ENCODE measurements at regions of chr3 and their contacts with region 1.

Region 1: DNA sequence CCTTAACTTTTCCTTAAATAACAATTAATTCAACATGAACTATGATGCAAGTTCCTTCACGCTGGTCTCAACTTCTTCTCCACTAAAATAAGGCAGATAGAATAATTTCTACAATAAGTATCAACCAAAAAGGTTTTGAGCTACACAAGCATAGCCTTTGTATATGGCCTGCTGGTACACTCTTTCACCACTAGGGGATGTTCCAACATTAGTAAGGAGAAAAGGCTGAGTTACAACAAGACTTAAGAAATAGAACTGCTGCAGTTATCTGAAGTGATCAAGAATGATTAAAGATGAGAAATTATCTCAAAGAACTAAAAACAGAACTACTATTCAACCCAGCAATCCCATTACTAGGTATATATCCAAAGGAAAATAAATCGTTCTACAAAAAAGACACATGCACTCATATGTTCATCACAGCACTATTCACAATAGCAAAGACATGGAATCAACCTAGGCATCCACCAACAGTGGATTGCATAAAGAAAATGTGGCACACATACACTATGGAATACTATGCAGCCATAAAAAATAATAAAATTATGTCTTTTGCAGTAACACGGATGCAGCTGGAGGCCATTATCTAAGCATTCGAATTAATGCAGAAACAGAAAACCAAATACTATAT is 14.4 kb downstream of the ATP13A3 start:
- DNase-seq: no peak
- H3K4me3 ChIP-seq: no peak overlapping the region
- H3K27ac ChIP-seq: no peak overlapping the region
- H3K4me1 ChIP-seq: peaks cover 7% of the 10 kb centered on the region
- H3K27me3 ChIP-seq: no peaks in the 10 kb centered on the region
- CTCF ChIP-seq: peak; percentile 46 to 92 (median 85)
- EP300 ChIP-seq: no peak
- POLR2A ChIP-seq: no peak

Region 2: GRCh38 chr3:194296454-194297263 is 175.7 kb before region 1 on chr3:
- intact Hi-C with region 1: no loop called
- DNase-seq: peak; percentile 56 to 82 (median 76)
- H3K4me3 ChIP-seq: peak overlapping the region; percentile 23
- H3K27ac ChIP-seq: peak overlapping the region; percentile 80 to 82
- H3K4me1 ChIP-seq: peaks cover 7% of the 10 kb centered on the region
- H3K27me3 ChIP-seq: no peaks in the 10 kb centered on the region
- CTCF ChIP-seq: no peak
- EP300 ChIP-seq: no peak
- POLR2A ChIP-seq: no peak

Region 3: DNA sequence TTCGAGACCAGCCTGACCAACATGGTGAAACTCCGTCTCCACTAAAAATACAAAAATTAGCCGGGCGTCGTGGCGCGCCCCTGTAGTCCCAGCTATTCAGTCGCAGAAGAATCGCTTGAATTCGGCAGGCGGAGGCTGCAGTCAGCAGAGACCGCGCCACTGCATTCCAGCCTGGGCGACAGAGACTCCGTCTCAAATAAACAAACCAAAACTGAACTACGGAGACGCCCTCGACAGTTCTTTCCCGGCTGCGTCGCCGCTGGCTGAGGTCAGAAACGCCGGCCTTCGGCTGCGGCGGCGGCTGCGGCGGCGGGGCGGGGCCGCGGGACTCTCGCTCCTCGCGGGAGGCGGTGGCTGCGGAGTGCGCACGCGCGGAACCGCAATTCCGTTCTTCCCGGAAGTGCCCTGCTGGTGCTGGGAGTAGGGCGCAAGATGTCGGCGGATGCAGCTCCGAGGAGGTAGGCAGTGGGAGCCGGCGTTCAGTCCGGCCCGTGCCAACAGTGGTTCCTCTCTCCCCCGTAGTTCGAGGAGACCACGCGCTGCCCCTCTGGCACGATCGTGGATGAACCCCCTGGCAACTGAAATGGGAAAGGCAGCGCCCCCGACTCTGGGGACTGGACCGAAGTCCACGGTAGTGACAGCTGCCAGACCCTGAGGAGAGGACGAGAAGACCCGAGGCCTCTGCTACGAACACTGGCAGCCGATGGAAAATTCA is 111.4 kb after region 1 on chr3:
- intact Hi-C with region 1: loop called in 1 of 4 experiments (anchors 5 kb)
- DNase-seq: peak; percentile 93 to 98 (median 96)
- H3K4me3 ChIP-seq: peak overlapping the region; percentile 96
- H3K27ac ChIP-seq: peak overlapping the region; percentile 50 to 72
- H3K4me1 ChIP-seq: peaks cover 2% of the 10 kb centered on the region
- H3K27me3 ChIP-seq: no peaks in the 10 kb centered on the region
- CTCF ChIP-seq: peak in 2 of 3 donors; percentile 15 to 18
- EP300 ChIP-seq: no peak
- POLR2A ChIP-seq: peak; percentile 91

Region 4: GRCh38 chr3:194592798-194593752 is 120.7 kb after region 1 on chr3:
- intact Hi-C with region 1: loop called (anchors 5 to 10 kb)
- DNase-seq: peak in 1 of 5 donors; percentile 22
- H3K4me3 ChIP-seq: no peak overlapping the region
- H3K27ac ChIP-seq: no peak overlapping the region
- H3K4me1 ChIP-seq: no peaks in the 10 kb centered on the region
- H3K27me3 ChIP-seq: no peaks in the 10 kb centered on the region
- CTCF ChIP-seq: no peak
- EP300 ChIP-seq: no peak
- POLR2A ChIP-seq: no peak

Region 5: DNA sequence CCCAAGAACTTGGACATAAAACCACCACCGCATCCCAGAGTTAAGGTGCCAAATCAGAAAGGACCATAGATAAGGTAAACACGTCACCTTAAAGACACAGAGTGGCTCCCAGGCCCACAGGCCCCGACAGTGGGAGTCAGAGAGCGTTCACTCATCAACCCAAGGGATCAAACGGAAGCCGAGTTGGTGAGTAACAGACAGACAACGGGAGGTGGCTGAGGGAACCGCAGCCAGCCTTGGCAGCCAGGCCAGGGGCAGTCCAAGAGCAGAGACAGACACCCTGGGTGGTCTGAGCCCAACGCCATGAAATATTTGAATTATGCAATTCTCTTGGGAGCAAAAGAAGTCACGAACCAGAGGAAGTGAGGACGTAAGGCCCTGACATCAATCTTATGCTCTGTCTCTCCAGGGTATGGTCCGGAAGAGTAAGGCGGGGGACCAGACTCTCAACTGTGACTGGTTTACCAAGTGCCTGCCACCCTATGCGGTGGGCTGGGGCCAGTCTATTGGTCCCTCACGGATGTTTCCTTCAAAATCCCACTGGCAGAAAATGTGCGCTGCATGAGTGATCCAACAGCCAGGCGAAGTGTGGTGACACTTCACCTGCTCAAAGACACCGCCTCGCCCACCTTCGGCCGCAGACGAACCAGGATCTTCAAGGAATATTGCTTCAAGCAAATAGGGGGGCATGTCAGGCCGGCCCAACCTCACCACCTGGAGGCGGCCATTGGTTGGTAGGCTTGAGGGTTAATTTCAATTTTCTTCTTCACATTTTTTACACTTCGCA is 126.6 kb after region 1 on chr3:
- intact Hi-C with region 1: loop called in 3 of 4 experiments (anchors 5 to 10 kb)
- DNase-seq: no peak
- H3K4me3 ChIP-seq: no peak overlapping the region
- H3K27ac ChIP-seq: no peak overlapping the region
- H3K4me1 ChIP-seq: no peaks in the 10 kb centered on the region
- H3K27me3 ChIP-seq: no peaks in the 10 kb centered on the region
- CTCF ChIP-seq: no peak
- EP300 ChIP-seq: no peak
- POLR2A ChIP-seq: no peak

Measured in ovary (tissue), 10 donors.